Heart right ventricle (tissue), 16 donors: ENCODE measurements at regions of chr20 and their contacts with region 1.

Region 1: DNA sequence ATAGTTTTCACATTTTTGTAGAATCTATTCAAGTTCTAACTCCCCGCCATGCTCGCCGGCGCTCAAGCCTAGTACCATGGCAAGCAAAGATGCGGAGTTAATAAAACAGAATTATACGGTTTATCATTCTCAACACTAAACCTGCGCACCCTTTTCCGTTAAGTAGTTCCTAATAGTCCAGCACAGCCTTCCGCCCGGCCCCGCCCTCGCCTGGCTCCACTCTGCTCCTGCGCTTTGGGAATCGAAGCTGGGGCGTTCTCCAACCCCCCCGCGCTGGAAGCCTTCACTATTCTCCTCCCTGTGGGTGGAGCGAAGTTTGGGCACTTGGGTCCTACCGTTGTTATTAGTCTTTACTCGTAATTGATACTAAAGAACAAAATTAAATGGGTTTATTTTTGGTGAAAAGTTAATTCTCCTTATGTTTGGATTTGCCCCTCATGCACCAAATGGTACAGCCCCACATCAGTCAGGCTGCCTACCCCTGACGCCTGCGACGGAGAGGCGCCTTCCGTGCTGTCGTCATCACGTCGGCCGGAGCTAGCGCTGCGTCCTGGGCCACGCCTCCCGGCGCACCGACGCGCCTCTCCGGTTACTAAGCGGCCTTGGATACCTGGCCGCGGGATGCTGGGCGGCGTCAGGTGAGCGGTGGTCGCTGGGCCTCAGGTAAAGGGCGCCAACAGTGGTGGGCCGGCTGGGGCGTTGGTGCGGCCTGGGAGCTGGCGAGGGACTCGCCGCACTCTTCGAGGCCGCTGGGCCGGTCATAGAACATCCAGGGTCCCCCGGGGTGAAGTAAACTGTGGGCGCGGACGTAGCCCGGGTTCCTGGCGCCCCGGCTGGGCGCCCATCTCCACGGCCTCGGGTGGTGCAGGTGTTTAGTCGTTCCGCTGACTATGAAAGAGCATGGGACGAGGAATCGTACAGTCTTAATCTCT is at the start of gene IFT52:
- DNase-seq: peak; percentile 92 to 96
- ATAC-seq: peak; percentile 99 to 100 (median 99)
- H3K4me3 ChIP-seq: peak within 1 kb of the TSS; percentile 60 to 97 (median 90)
- H3K27ac ChIP-seq: peak within 1 kb of the TSS; percentile 44 to 92 (median 86)
- H3K4me1 ChIP-seq: peaks cover 0 to 20% (median 13%) of the 10 kb centered on the region in 9 donors
- H3K27me3 ChIP-seq: no peaks in the 10 kb centered on the region
- CTCF ChIP-seq: peak in 3 of 9 donors; percentile 5 to 13 (median 6)
- total RNA-seq, gene IFT52: 5.2 to 8.0 (median 6.8) TPM

Region 2: DNA sequence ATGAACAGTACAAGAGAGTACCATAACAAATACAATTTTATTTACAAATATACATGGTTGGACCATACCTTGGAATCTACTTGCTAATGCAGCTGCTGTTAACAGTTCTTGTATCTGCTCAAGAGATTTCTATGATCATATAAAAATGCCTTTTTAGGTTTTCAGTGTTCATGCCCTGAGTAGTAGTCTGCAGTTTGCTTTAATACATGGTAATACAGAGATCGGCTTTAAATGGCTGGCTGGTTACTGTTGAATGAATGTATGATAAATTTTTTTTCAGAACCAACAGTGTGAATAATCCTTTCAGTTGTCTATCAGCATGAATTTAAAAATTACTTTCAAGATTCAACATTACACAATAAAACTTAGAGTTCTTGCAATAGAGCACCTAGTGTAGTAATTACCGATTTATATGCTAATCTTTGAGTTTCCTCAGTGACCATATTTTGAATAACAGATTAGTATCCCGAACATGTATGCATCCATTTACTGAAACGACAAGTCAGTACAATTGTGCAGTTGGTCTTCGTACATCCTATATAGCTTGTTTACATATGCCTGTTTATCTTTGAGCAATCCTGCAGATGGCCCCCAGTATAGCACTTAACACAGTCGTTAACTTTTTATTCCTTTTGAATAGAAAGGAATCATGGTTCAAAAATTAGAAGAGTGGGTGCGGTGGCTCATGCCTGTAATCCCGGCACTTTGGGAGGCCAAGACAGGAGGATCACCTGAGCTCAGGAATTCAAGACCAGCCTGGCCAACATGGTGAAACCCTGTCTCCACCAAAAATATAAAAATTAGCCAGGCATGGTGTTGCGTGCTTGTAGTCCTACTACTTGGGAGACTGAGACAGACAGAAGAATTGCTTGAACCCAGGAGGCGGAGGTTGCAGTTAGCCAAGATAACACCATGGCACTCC is 126.5 kb before region 1 on chr20:
- intact Hi-C with region 1: loop called in 5 of 10 experiments (anchors 5 to 10 kb)
- DNase-seq: no peak
- ATAC-seq: no peak
- H3K4me3 ChIP-seq: no peak overlapping the region
- H3K27ac ChIP-seq: no peak overlapping the region
- H3K4me1 ChIP-seq: peaks cover 0 to 48% (median 30%) of the 10 kb centered on the region in 9 donors
- H3K27me3 ChIP-seq: no peaks in the 10 kb centered on the region
- CTCF ChIP-seq: no peak